Spleen (tissue), 13 donors: ENCODE measurements at regions of chr1 and their contacts with region 1.

Region 1: GRCh38 chr1:230917284-230918135 is 49.2 kb upstream of the C1orf198 start:
- DNase-seq: peak; percentile 85
- H3K4me3 ChIP-seq: no peak overlapping the region
- H3K27ac ChIP-seq: no peak overlapping the region
- H3K4me1 ChIP-seq: peaks cover 0 to 6% (median 0%) of the 10 kb centered on the region in 6 donors
- H3K27me3 ChIP-seq: no peaks in the 10 kb centered on the region
- CTCF ChIP-seq: peak; percentile 46 to 88 (median 77)
- POLR2A ChIP-seq: no peak

Region 2: GRCh38 chr1:230669543-230669942 is 248.0 kb before region 1 on chr1:
- intact Hi-C with region 1: no loop called
- DNase-seq: no peak
- H3K4me3 ChIP-seq: no peak overlapping the region
- H3K27ac ChIP-seq: no peak overlapping the region
- H3K4me1 ChIP-seq: no peaks in the 10 kb centered on the region
- H3K27me3 ChIP-seq: no peaks in the 10 kb centered on the region
- CTCF ChIP-seq: no peak
- POLR2A ChIP-seq: no peak

Region 3: GRCh38 chr1:230986976-230987375 is 69.5 kb after region 1 on chr1:
- intact Hi-C with region 1: no loop called
- DNase-seq: no peak
- H3K4me3 ChIP-seq: no peak overlapping the region
- H3K27ac ChIP-seq: no peak overlapping the region
- H3K4me1 ChIP-seq: no peaks in the 10 kb centered on the region
- H3K27me3 ChIP-seq: no peaks in the 10 kb centered on the region
- CTCF ChIP-seq: no peak
- POLR2A ChIP-seq: no peak

Region 4: GRCh38 chr1:231091831-231092301 is 174.4 kb after region 1 on chr1:
- intact Hi-C with region 1: loop called (anchors 10 kb)
- DNase-seq: no peak
- H3K4me3 ChIP-seq: no peak overlapping the region
- H3K27ac ChIP-seq: no peak overlapping the region
- H3K4me1 ChIP-seq: peaks cover 0 to 13% (median 7%) of the 10 kb centered on the region in 6 donors
- H3K27me3 ChIP-seq: peaks cover 0 to 43% (median 0%) of the 10 kb centered on the region in 7 donors
- CTCF ChIP-seq: peak in 10 of 11 experiments; percentile 7 to 58 (median 44)
- POLR2A ChIP-seq: no peak

Region 5: DNA sequence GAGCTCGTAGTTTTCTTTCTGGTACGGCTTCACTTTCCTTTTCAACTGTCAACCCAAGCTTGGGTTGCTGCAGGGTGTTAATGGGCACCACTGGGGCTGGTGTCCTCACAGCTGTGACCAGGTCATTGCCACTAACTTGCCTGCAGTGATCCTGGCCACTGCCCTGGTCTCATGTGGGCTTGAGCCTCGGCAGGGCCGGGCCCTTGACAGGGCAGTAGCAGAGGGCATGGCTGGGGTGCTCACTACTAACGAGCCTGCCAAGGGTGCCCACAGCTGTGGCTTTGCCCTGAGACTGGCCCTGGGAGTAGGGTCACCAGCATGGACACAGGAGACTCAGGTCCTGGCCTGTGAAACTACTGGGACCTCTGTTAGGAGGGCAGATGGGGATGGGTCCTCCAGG is 292.0 kb after region 1 on chr1:
- intact Hi-C with region 1: loop called (anchors 2 kb)
- DNase-seq: no peak
- H3K4me3 ChIP-seq: no peak overlapping the region
- H3K27ac ChIP-seq: no peak overlapping the region
- H3K4me1 ChIP-seq: peaks cover 7 to 14% (median 10%) of the 10 kb centered on the region in 6 donors
- H3K27me3 ChIP-seq: no peaks in the 10 kb centered on the region
- CTCF ChIP-seq: no peak
- POLR2A ChIP-seq: no peak